ENCODE measurements at regions of chr14 and their contacts with region 1.

Region 1: GRCh38 chr14:21269252-21270046 is at the start of gene HNRNPC:
- DNase-seq: peak; percentile 100
- ATAC-seq: peak; percentile 79 to 94 (median 88)
- H3K4me3 ChIP-seq: peak within 1 kb of the TSS; percentile 81
- H3K4me3 Mint-ChIP-seq: peak within 1 kb of the TSS; percentile 93
- H3K27ac ChIP-seq: peak within 1 kb of the TSS; percentile 97
- H3K27ac Mint-ChIP-seq: peak within 1 kb of the TSS; percentile 96 to 97
- H3K4me1 ChIP-seq: peaks cover 29% of the 10 kb centered on the region
- H3K4me1 Mint-ChIP-seq: peaks cover 38 to 51% of the 10 kb centered on the region in 2 donors
- H3K27me3 ChIP-seq: no peaks in the 10 kb centered on the region
- H3K27me3 Mint-ChIP-seq: no peaks in the 10 kb centered on the region
- CTCF ChIP-seq: no peak
- total RNA-seq, gene HNRNPC: 501 to 547 (median 515) TPM

Region 2: DNA sequence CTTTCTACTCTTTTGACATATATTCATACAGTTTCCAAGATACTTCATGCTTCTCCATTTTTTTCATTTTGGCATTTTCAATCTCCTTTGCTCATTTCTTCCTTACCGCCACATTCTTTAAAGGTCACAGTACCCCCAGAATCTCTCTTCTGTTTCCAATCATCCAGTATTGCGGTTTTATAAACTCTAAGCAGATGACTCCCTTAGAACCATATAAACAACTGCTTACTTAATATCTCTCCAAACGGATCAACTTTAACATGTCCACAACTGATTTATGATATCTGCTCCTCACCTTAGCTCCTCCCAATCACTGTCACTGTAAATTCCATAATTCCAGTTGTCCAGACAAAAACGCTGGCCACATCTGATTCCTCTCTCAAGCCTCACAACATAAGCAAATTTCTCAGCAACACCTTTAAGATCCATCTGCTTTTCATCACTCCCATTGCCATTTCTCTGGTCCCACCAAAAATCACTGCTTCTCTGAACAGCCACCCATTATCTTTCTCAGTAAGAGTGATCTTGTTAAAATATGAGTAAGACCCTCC is 49.8 kb before region 1 on chr14:
- intact Hi-C with region 1: loop called (anchors 10 kb)
- DNase-seq: no peak
- ATAC-seq: no peak
- H3K4me3 ChIP-seq: no peak overlapping the region
- H3K4me3 Mint-ChIP-seq: no peak overlapping the region
- H3K27ac ChIP-seq: no peak overlapping the region
- H3K27ac Mint-ChIP-seq: peak overlapping the region; percentile 60 to 93
- H3K4me1 ChIP-seq: peaks cover 24% of the 10 kb centered on the region
- H3K4me1 Mint-ChIP-seq: peaks cover 53 to 64% of the 10 kb centered on the region in 2 donors
- H3K27me3 ChIP-seq: no peaks in the 10 kb centered on the region
- H3K27me3 Mint-ChIP-seq: no peaks in the 10 kb centered on the region
- CTCF ChIP-seq: no peak

Region 3: DNA sequence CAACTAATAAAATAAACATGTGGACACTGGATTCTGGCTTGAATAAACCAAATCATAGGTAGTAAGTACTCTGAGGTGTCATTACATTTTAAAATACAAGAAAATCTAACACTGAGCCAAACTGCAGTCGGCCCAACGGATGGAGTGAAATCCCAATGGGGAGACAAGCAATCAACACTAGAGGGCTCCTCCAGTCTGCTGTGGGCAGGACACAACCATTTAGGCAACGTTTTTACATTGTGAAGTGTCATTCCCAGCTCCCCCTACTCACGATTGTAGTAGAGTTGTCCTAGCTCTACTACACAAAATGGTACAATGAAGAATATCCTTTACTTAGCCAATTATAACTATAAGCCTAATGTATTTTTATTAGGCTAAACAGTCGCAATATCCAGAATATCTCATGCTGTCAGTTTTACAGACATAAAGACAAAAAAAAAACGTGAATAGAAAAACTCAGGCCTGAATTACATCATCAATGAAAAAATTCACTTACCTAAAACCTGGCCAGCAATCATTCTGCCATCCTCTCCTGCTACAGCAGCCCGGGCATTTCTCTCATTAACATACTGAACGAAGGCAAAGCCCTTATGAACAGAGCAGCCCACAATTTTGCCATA is 35.9 kb before region 1 on chr14:
- intact Hi-C with region 1: loop called (anchors 1 kb)
- DNase-seq: peak in 1 of 2 donors; percentile 60
- ATAC-seq: no peak
- H3K4me3 ChIP-seq: no peak overlapping the region
- H3K4me3 Mint-ChIP-seq: no peak overlapping the region
- H3K27ac ChIP-seq: no peak overlapping the region
- H3K27ac Mint-ChIP-seq: peak overlapping the region; percentile 90 to 94
- H3K4me1 ChIP-seq: peaks cover 37% of the 10 kb centered on the region
- H3K4me1 Mint-ChIP-seq: peaks cover 73 to 81% of the 10 kb centered on the region in 2 donors
- H3K27me3 ChIP-seq: no peaks in the 10 kb centered on the region
- H3K27me3 Mint-ChIP-seq: no peaks in the 10 kb centered on the region
- CTCF ChIP-seq: no peak

Region 4: GRCh38 chr14:21308479-21309237 is 39.2 kb after region 1 on chr14:
- intact Hi-C with region 1: loop called (anchors 1 kb)
- DNase-seq: peak; percentile 51 to 86
- ATAC-seq: peak; percentile 88 to 92 (median 91)
- H3K4me3 ChIP-seq: peak overlapping the region; percentile 40
- H3K4me3 Mint-ChIP-seq: peak overlapping the region; percentile 79
- H3K27ac ChIP-seq: peak overlapping the region; percentile 69
- H3K27ac Mint-ChIP-seq: peak overlapping the region; percentile 53 to 77
- H3K4me1 ChIP-seq: peaks cover 12% of the 10 kb centered on the region
- H3K4me1 Mint-ChIP-seq: peaks cover 16 to 25% of the 10 kb centered on the region in 2 donors
- H3K27me3 ChIP-seq: peaks cover 2% of the 10 kb centered on the region
- H3K27me3 Mint-ChIP-seq: no peaks in the 10 kb centered on the region
- CTCF ChIP-seq: no peak

Region 5: GRCh38 chr14:21383848-21384493 is 114.5 kb after region 1 on chr14 and contains the start of gene SUPT16H:
- intact Hi-C with region 1: loop called (anchors 1 kb)
- DNase-seq: peak; percentile 89 to 96
- ATAC-seq: peak; percentile 89 to 98 (median 93)
- H3K4me3 ChIP-seq: peak within 1 kb of the TSS; percentile 96
- H3K4me3 Mint-ChIP-seq: peak within 1 kb of the TSS; percentile 98
- H3K27ac ChIP-seq: peak within 1 kb of the TSS; percentile 93
- H3K27ac Mint-ChIP-seq: peak within 1 kb of the TSS; percentile 96 to 99
- H3K4me1 ChIP-seq: peaks cover 17% of the 10 kb centered on the region
- H3K4me1 Mint-ChIP-seq: peaks cover 33% of the 10 kb centered on the region in 2 donors
- H3K27me3 ChIP-seq: no peaks in the 10 kb centered on the region
- H3K27me3 Mint-ChIP-seq: no peaks in the 10 kb centered on the region
- CTCF ChIP-seq: no peak
- total RNA-seq, gene SUPT16H: 60.3 to 72.6 (median 65.1) TPM

Region 6: GRCh38 chr14:21455911-21456667 is 186.6 kb after region 1 on chr14 and contains the start of gene CHD8:
- intact Hi-C with region 1: loop called (anchors 1 kb)
- DNase-seq: peak; percentile 96 to 100
- ATAC-seq: peak; percentile 95 to 100 (median 96)
- H3K4me3 ChIP-seq: peak within 1 kb of the TSS; percentile 86
- H3K4me3 Mint-ChIP-seq: peak within 1 kb of the TSS; percentile 97
- H3K27ac ChIP-seq: peak within 1 kb of the TSS; percentile 96
- H3K27ac Mint-ChIP-seq: peak within 1 kb of the TSS; percentile 98
- H3K4me1 ChIP-seq: peaks cover 18% of the 10 kb centered on the region
- H3K4me1 Mint-ChIP-seq: peaks cover 36 to 45% of the 10 kb centered on the region in 2 donors
- H3K27me3 ChIP-seq: no peaks in the 10 kb centered on the region
- H3K27me3 Mint-ChIP-seq: no peaks in the 10 kb centered on the region
- CTCF ChIP-seq: peak; percentile 61
- total RNA-seq, gene CHD8: 150 to 167 (median 162) TPM

Measured in natural killer cell (primary cell).